Activated T-helper 2 cell treated with anti-CD3 and anti-CD28 coated beads, Interferon-gamma antibody, Interleukin-2, Interleukin-4, amounts not matched to agents 10 μg/mL and 5 μg/mL and 100 μg/mL, durations not matched to agents 14 hours and 24 hours and 36 hours (primary cell): ENCODE measurements at regions of chr11 and their contacts with region 1.

Region 1: GRCh38 chr11:3037040-3037944 is 19.9 kb downstream of the CARS1 start:
- DNase-seq: no peak
- H3K4me3 Mint-ChIP-seq: no peak overlapping the region
- H3K27ac Mint-ChIP-seq: peak overlapping the region; percentile 8
- H3K4me1 Mint-ChIP-seq: peaks cover 4% of the 10 kb centered on the region
- H3K27me3 Mint-ChIP-seq: no peaks in the 10 kb centered on the region

Region 2: DNA sequence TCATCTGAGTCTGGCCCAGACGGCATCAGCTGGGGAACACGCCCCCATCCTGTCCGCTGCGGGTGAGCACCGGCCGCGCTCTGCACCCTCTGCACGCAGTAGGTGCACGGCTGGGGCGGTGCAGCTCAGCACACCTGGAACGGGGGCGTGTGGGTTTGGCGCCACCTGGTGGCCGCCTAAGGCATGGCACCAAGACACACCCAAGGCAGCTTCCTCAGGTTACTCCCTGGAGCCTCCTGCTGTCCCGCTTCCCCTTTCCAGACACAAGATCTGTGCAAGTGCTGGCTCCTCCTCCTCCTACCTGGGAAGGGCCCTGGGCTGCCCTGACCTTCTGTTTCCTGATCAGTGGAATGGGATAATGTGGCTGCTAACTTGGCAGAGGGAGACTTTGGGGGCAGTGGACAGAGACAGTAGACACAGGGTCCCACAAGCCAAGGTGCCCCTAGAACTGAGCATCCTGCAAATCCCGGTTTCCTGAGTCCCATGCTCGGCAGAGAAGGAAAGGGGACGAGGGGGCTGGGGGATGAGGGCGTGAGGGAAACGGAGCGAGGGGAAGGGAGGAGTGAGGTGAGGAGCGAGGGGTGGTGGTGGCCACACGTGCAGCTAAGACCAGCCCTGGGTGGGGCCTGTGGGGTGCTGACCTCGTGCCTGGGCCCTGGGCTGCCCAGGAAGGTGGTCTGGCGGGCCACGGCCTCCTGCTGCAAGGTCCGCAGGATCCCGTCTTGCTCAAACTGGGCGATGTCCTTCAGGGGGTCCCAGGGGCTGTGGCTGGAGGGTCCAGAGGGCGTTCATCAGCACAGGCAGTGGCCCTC is 54.7 kb after region 1 on chr11:
- intact Hi-C with region 1: loop called (anchors 1 kb)
- DNase-seq: peak; percentile 66
- H3K4me3 Mint-ChIP-seq: no peak overlapping the region
- H3K27ac Mint-ChIP-seq: no peak overlapping the region
- H3K4me1 Mint-ChIP-seq: no peaks in the 10 kb centered on the region
- H3K27me3 Mint-ChIP-seq: peaks cover 1% of the 10 kb centered on the region

Region 3: DNA sequence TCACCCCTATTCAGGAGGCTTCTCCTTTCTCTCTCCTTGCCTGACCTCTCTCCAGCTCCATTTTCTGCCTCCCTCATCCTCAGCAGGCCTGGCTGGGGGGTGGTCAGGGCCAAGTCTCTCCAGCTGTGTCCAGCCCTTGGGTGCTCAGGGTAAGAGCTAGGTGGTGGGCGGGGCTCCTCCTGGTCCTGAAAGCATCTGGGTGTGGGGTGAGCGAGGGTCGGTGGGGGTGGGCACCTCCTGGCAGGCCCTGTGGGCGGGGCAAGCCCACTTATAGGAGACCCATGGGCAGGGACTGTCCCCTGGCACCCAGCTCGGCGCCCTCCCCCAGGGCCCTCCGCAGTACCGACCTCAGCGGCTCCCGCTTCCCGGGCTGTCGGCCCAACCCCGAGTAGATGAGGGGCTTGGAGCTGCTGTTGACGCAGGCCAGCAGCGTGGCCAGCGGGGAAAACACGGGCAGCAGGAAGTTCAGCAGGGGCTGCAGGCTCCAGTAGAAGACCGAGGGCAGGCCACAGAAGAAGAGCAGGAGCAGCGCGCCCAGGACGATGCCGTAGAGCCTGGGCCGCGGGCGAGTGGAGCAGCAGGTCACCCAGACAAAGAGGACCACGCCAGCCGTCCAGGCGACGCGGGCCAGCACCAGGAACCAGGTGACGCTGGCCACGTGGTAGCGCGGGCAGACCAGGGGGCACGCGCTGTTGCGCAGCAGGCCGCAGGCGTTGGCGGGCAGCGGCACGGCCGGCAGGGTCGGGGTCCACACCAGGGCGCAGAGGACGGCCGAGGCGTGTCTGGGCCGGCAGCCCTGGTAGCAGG is 180.6 kb after region 1 on chr11:
- intact Hi-C with region 1: loop called (anchors 5 kb)
- DNase-seq: no peak
- H3K4me3 Mint-ChIP-seq: no peak overlapping the region
- H3K27ac Mint-ChIP-seq: no peak overlapping the region
- H3K4me1 Mint-ChIP-seq: peaks cover 4% of the 10 kb centered on the region
- H3K27me3 Mint-ChIP-seq: peaks cover 2% of the 10 kb centered on the region